Panc1 (cell line): ENCODE measurements at regions of chr11 and their contacts with region 1.

Region 1: DNA sequence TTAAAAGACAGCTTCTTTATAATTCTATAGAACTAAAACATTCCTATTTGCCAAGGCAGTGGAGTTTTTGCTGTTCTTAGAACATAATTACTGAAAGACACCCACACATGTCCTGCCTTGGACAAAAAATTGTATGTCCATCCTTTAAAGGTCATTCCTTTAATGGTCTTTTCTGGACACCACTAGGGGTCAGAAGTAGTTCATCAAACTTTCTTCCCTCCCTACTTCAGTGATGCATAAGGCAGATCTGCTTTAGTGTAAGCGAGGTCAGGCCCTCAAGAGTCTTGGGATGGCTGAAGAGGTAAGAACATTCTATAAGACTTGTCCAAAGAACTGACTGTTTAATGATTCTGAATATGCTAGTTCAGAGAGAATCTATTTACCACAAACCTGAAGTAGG is 4.3 kb upstream of the OR51V1 start:
- DNase-seq: peak; percentile 69
- ATAC-seq: peak; percentile 98
- H3K4me3 ChIP-seq: no peak overlapping the region
- H3K27ac ChIP-seq: no peak overlapping the region
- H3K4me1 ChIP-seq: no peaks in the 10 kb centered on the region
- H3K27me3 ChIP-seq: peaks cover 13% of the 10 kb centered on the region
- CTCF ChIP-seq: peak; percentile 75

Region 2: GRCh38 chr11:4626207-4627099 is 578.3 kb before region 1 on chr11:
- CTCF ChIA-PET with region 1: no interaction called
- POLR2A ChIA-PET with region 1: no interaction called
- in situ Hi-C with region 1: no loop called
- intact Hi-C with region 1: loop called (anchors 10 kb)
- DNase-seq: peak; percentile 60
- ATAC-seq: peak; percentile 99
- H3K4me3 ChIP-seq: no peak overlapping the region
- H3K27ac ChIP-seq: no peak overlapping the region
- H3K4me1 ChIP-seq: no peaks in the 10 kb centered on the region
- H3K27me3 ChIP-seq: peaks cover 3% of the 10 kb centered on the region; the same call in 1 of the 2 replicates
- CTCF ChIP-seq: peak; percentile 88

Region 3: DNA sequence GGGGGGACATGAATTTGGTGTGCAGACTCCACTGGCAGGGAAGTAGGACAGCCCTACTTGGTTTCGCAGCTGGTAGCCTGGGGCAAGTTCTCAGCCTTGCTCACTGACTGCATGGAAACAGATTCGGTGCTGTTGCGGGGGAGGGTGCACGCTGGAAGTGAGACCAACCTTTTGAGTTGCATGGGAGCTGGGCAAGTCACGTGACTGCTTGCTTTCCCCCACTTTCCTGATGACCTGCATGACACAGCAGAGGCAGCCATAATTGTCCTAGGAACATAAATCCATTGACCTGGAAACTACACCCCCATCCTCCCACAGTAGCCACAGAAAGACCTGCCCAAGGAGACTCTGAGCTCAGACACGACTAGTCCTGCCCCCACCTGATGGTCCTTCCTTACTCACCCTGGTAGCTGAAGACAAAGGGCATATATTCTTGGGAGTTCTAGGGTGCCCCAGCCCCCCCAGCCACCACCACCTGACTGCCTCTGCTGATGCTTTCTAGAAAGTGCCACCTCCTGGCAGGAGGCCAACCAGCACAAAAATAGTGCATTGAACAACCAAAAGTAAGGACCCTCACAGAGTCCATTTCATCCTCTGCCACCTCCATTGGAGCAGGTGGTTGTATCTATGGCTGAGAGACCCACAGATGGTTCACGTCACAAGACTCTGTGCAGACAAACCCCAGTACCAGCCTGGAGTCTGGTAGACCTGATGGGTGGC is 53.9 kb after region 1 on chr11:
- CTCF ChIA-PET with region 1: no interaction called
- POLR2A ChIA-PET with region 1: no interaction called
- in situ Hi-C with region 1: no loop called
- intact Hi-C with region 1: no loop called
- DNase-seq: no peak
- ATAC-seq: no peak
- H3K4me3 ChIP-seq: no peak overlapping the region
- H3K27ac ChIP-seq: no peak overlapping the region
- H3K4me1 ChIP-seq: no peaks in the 10 kb centered on the region
- H3K27me3 ChIP-seq: no peaks in the 10 kb centered on the region
- CTCF ChIP-seq: no peak

Region 4: DNA sequence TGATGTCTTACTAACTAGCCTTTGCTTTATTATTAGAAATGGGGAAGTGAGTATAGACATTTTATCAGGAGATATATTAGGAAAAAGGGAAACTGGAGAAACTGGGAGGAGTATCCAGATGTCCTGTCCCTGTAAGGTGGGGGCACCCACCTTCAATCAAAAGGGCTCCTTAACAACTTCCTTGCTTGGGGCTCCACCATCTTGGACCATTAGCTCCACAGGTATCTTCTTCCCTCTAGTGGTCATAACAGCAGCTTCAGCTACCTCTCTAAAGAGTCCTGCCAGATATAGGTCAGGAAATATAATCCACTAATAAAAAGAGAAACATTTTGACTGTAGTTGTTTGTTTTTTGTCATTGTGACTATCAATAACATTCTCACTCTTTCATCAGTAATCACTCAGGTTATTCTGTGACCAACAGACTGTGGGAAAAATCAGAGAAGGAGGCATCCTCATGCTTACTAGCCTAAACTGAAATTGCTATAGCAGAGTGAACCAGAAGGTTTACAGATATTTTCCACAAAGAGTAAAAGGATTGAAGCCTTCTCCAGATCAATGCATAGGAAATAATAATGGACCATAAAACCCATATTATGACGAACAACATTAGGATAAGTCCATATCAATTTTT is 86.5 kb after region 1 on chr11:
- CTCF ChIA-PET with region 1: interaction called, 3 read pairs
- POLR2A ChIA-PET with region 1: no interaction called
- in situ Hi-C with region 1: no loop called
- intact Hi-C with region 1: loop called (anchors 2 kb)
- DNase-seq: peak; percentile 38
- ATAC-seq: peak; percentile 94
- H3K4me3 ChIP-seq: no peak overlapping the region
- H3K27ac ChIP-seq: no peak overlapping the region
- H3K4me1 ChIP-seq: no peaks in the 10 kb centered on the region
- H3K27me3 ChIP-seq: peaks cover 2% of the 10 kb centered on the region; the same call in 1 of the 2 replicates
- CTCF ChIP-seq: peak; percentile 81

Region 5: DNA sequence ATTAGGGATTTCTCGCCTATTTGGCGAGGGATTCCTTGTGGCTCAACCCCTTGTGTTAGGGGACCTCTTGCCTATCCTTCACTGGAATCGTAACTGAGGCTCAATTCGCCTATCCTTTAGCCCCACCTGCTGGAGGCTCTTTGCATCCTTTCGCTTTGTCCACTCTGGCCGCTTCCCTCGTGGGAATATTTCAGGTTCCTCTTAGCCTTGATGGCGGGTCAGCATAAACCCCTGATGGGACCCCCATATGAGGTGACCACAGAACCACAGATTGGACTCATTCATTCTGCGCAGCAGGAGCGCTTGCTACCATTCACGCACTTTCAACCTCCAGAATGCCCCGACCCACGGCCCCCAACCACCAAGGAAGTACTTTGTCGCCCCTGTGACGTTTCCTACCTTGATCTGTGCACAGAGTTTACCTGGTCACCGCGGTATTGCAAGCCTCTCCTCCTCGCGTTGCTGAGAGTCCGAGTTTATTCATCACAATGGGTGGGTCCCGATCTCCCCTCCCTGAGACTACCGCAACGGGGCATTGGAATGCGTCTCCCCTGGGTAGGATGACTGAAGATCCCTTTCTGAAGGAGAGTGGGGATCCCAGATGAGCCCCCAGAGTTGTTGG is 603.8 kb after region 1 on chr11 and contains the start of gene OR52N2:
- CTCF ChIA-PET with region 1: no interaction called
- POLR2A ChIA-PET with region 1: no interaction called
- in situ Hi-C with region 1: no loop called
- intact Hi-C with region 1: loop called (anchors 5 kb)
- DNase-seq: peak; percentile 76
- ATAC-seq: peak; percentile 98
- H3K4me3 ChIP-seq: peak within 1 kb of the TSS; percentile 42 to 69
- H3K27ac ChIP-seq: no peak within 1 kb of the TSS
- H3K4me1 ChIP-seq: peaks cover 7% of the 10 kb centered on the region
- H3K27me3 ChIP-seq: peaks cover 11% of the 10 kb centered on the region; the same call in 1 of the 2 replicates
- CTCF ChIP-seq: peak; percentile 94
- total RNA-seq, gene OR52N2: not detected